ENCODE measurements at regions of chr10 and their contacts with region 1.

Region 1: DNA sequence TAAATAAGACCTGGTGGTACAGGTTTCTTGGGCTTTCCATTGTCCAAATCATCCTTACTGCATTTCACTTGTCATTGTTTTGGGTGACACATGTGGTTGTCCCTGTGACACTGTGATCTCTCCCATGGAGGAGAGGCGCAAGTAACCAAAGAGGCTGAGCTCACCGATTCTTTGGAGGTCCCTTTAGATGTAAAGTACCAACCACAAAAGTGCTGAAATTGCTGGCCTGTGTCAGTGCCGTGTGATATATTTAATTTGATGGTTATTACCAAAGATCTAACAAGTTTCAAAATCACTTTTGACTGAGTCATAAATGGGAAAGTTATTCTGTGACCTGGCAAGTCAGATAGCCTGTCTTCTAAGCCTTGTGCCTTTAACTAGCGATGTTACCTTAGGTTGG is 19.4 kb downstream of the MCM10 start:
- DNase-seq: no peak
- ATAC-seq: no peak
- H3K4me3 Mint-ChIP-seq: no peak overlapping the region
- H3K27ac Mint-ChIP-seq: no peak overlapping the region
- H3K4me1 Mint-ChIP-seq: no peaks in the 10 kb centered on the region
- H3K27me3 Mint-ChIP-seq: no peaks in the 10 kb centered on the region

Region 2: GRCh38 chr10:13120786-13121499 is 59.8 kb before region 1 on chr10:
- CTCF ChIA-PET with region 1: no interaction called
- POLR2A ChIA-PET with region 1: no interaction called
- DNase-seq: no peak
- ATAC-seq: no peak
- H3K4me3 Mint-ChIP-seq: no peak overlapping the region
- H3K27ac Mint-ChIP-seq: no peak overlapping the region
- H3K4me1 Mint-ChIP-seq: peaks cover 19% of the 10 kb centered on the region
- H3K27me3 Mint-ChIP-seq: no peaks in the 10 kb centered on the region

Region 3: DNA sequence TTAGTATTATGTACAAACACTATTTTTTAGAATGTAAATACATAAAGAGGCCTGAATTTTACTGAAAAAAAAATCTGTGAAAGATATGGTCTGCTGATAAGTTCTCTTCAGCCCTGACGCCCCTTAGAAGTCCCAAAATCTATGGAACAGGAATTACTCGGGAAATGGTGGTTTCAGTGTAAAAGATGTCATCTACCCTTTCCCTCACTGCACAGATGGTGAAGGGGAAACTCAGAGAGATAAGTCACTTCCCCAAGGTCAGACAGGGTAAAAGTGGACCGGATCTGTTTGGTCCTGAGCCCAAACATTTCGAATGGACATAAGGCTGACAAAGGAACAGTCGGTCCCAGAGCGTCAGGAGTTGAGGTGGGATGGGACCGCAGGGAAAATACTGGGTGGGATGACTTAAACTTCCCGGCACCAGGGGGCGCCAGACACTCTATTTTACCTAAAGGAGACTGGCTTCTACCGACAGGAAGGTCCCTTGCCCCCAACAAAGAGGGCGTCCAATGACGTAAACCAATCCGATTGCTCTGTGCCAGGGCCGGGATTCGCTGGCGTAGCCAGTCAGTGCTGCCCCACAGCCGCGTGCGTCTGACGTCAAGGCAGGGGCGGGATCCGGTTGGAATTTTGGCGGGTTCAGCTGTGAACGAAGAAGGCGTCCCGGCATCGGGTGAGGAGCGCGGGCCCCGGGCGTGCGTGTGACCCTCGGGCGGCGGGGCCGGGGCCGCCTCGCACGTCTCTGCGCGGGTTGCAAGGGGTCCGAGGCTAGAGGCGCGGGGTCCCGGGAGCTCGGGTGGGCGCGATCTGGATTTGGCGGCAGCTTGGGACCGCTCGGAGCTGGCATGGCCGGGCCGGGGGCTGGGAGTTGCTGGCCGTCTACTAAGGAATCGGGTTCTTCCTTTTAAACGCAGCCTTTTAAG is 19.6 kb before region 1 on chr10 and contains the start of gene MCM10:
- CTCF ChIA-PET with region 1: interaction called, 25 read pairs
- POLR2A ChIA-PET with region 1: no interaction called
- DNase-seq: peak; percentile 99
- ATAC-seq: peak; percentile 100
- H3K4me3 Mint-ChIP-seq: peak within 1 kb of the TSS; percentile 91
- H3K27ac Mint-ChIP-seq: peak within 1 kb of the TSS; percentile 86
- H3K4me1 Mint-ChIP-seq: peaks cover 47% of the 10 kb centered on the region
- H3K27me3 Mint-ChIP-seq: no peaks in the 10 kb centered on the region
- total RNA-seq, gene MCM10: 68.3 to 73.5 TPM

Region 4: GRCh38 chr10:13234172-13234571 is 53.4 kb after region 1 on chr10 and contains the start of gene UCMA:
- CTCF ChIA-PET with region 1: no interaction called
- POLR2A ChIA-PET with region 1: no interaction called
- DNase-seq: no peak
- ATAC-seq: no peak
- H3K4me3 Mint-ChIP-seq: no peak within 1 kb of the TSS
- H3K27ac Mint-ChIP-seq: no peak within 1 kb of the TSS
- H3K4me1 Mint-ChIP-seq: no peaks in the 10 kb centered on the region
- H3K27me3 Mint-ChIP-seq: no peaks in the 10 kb centered on the region
- total RNA-seq, gene UCMA: not detected